Caco-2 (cell line): ENCODE measurements at regions of chr20 and their contacts with region 1.

Region 1: GRCh38 chr20:32031007-32031958 is 20.8 kb upstream of the HCK start:
- DNase-seq: peak; percentile 97 to 98
- H3K4me3 ChIP-seq: peak overlapping the region; percentile 31
- H3K4me3 Mint-ChIP-seq: peak overlapping the region; percentile 54
- H3K27ac Mint-ChIP-seq: no peak overlapping the region
- H3K4me1 ChIP-seq: peaks cover 6% of the 10 kb centered on the region
- H3K4me1 Mint-ChIP-seq: no peaks in the 10 kb centered on the region
- H3K27me3 ChIP-seq: peaks cover 7% of the 10 kb centered on the region
- H3K27me3 Mint-ChIP-seq: peaks cover 27% of the 10 kb centered on the region
- CTCF ChIP-seq: peak; percentile 24 to 100

Region 2: GRCh38 chr20:31822421-31823330 is 208.6 kb before region 1 on chr20:
- CTCF ChIA-PET with region 1: interaction called, 14 read pairs
- POLR2A ChIA-PET with region 1: no interaction called
- intact Hi-C with region 1: loop called (anchors 1 kb)
- DNase-seq: peak; percentile 80 to 92
- H3K4me3 ChIP-seq: no peak overlapping the region
- H3K4me3 Mint-ChIP-seq: no peak overlapping the region
- H3K27ac Mint-ChIP-seq: no peak overlapping the region
- H3K4me1 ChIP-seq: no peaks in the 10 kb centered on the region
- H3K4me1 Mint-ChIP-seq: no peaks in the 10 kb centered on the region
- H3K27me3 ChIP-seq: no peaks in the 10 kb centered on the region
- H3K27me3 Mint-ChIP-seq: no peaks in the 10 kb centered on the region
- CTCF ChIP-seq: peak; percentile 100

Region 3: DNA sequence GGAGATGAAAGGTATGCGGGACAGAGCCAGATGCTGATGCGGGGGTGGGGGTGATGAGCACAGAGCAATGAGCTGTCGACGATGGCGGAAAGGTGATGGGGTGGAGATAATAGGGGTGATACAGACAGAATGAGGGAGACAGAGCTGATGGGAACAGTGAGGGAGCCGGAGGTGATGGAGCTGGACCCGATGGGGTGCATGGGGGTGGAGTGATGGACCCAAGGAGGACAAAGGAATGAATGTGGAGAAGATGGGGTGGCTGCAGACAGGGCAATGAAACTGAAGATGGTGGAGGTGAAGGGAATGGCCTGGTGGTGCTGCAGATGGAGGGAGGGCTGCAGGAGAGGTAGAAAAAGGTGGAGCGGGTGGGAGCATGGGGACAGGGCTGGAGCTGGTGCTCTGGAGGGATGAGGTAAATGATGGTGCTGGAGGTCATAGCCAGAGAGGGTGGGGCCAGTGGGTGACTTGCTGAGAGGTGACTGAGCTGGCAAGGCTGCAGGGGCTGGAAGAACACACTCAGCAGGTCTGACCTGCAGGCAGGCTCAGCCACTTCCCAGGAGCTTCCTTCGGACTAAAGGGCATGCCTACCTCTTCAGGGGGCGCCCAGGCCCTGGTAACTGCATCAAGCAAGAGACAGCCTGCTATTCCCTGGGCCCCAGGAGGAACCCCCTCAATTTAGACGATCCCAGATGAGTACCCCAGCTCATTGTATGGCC is 179.9 kb before region 1 on chr20:
- CTCF ChIA-PET with region 1: interaction called, 33 read pairs
- POLR2A ChIA-PET with region 1: interaction called, 3 read pairs
- intact Hi-C with region 1: loop called (anchors 1 kb)
- DNase-seq: no peak
- H3K4me3 ChIP-seq: no peak overlapping the region
- H3K4me3 Mint-ChIP-seq: no peak overlapping the region
- H3K27ac Mint-ChIP-seq: no peak overlapping the region
- H3K4me1 ChIP-seq: peaks cover 7% of the 10 kb centered on the region; the same call in 1 of the 2 replicates
- H3K4me1 Mint-ChIP-seq: no peaks in the 10 kb centered on the region
- H3K27me3 ChIP-seq: peaks cover 11% of the 10 kb centered on the region
- H3K27me3 Mint-ChIP-seq: peaks cover 18% of the 10 kb centered on the region
- CTCF ChIP-seq: no peak

Region 4: DNA sequence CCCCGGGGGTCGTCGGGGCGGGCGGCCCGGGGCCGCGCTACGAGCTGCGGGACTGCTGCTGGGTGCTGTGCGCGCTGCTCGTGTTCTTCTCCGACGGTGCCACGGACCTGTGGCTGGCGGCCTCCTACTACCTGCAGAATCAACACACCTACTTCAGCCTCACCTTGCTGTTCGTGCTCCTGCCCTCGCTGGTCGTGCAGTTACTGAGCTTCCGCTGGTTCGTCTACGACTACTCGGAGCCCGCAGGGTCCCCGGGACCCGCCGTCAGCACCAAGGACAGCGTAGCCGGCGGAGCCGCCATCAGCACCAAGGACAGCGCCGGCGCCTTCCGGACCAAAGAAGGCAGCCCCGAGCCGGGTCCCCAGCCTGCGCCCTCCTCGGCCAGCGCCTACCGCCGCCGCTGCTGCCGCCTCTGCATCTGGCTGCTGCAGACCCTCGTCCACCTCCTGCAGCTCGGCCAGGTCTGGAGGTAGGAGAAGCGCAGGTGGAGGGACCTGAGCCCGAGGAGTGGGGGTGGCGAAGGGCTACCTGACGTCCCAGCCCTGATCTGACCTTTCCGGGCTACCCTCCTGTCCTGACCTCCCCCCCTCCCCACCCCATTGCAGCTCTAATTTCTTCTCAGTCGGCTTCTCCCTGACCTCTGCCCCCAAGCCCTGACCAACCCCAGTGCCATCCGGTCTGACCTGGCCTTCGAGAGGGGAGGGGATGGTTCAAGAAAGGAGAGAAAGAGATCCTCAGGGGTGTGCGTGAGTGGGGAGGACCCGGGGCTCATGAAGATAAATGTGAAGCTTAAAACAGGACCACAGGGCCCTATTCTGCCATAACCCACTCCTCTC is 62.8 kb before region 1 on chr20:
- CTCF ChIA-PET with region 1: no interaction called
- POLR2A ChIA-PET with region 1: no interaction called
- intact Hi-C with region 1: loop called (anchors 5 kb)
- DNase-seq: peak; percentile 88 to 97
- H3K4me3 ChIP-seq: no peak overlapping the region
- H3K4me3 Mint-ChIP-seq: peak overlapping the region; percentile 61
- H3K27ac Mint-ChIP-seq: no peak overlapping the region
- H3K4me1 ChIP-seq: 0 out of 2 replicates have a peak, but pooled peaks cover 11% of the 10 kb centered on the region
- H3K4me1 Mint-ChIP-seq: no peaks in the 10 kb centered on the region
- H3K27me3 ChIP-seq: peaks cover 2% of the 10 kb centered on the region
- H3K27me3 Mint-ChIP-seq: peaks cover 35% of the 10 kb centered on the region
- CTCF ChIP-seq: peak in 1 of 2 experiments; percentile 11

Region 5: GRCh38 chr20:31979713-31980426 is 51.4 kb before region 1 on chr20:
- CTCF ChIA-PET with region 1: no interaction called
- POLR2A ChIA-PET with region 1: no interaction called
- intact Hi-C with region 1: no loop called
- DNase-seq: no peak
- H3K4me3 ChIP-seq: no peak overlapping the region
- H3K4me3 Mint-ChIP-seq: no peak overlapping the region
- H3K27ac Mint-ChIP-seq: no peak overlapping the region
- H3K4me1 ChIP-seq: no peaks in the 10 kb centered on the region
- H3K4me1 Mint-ChIP-seq: no peaks in the 10 kb centered on the region
- H3K27me3 ChIP-seq: 0 out of 2 replicates have a peak, but pooled peaks cover 1% of the 10 kb centered on the region
- H3K27me3 Mint-ChIP-seq: peaks cover 37% of the 10 kb centered on the region
- CTCF ChIP-seq: no peak

Region 6: GRCh38 chr20:32091888-32092346 is 60.6 kb after region 1 on chr20:
- CTCF ChIA-PET with region 1: interaction called, 9 read pairs
- POLR2A ChIA-PET with region 1: no interaction called
- intact Hi-C with region 1: loop called (anchors 1 kb)
- DNase-seq: peak; percentile 91 to 95
- H3K4me3 ChIP-seq: no peak overlapping the region
- H3K4me3 Mint-ChIP-seq: no peak overlapping the region
- H3K27ac Mint-ChIP-seq: no peak overlapping the region
- H3K4me1 ChIP-seq: no peaks in the 10 kb centered on the region
- H3K4me1 Mint-ChIP-seq: no peaks in the 10 kb centered on the region
- H3K27me3 ChIP-seq: no peaks in the 10 kb centered on the region; the same call in 1 of the 2 replicates
- H3K27me3 Mint-ChIP-seq: peaks cover 13% of the 10 kb centered on the region
- CTCF ChIP-seq: peak; percentile 99 to 100

Region 7: GRCh38 chr20:32132911-32133549 is 101.7 kb after region 1 on chr20:
- CTCF ChIA-PET with region 1: no interaction called
- POLR2A ChIA-PET with region 1: no interaction called
- intact Hi-C with region 1: no loop called
- DNase-seq: peak in 1 of 2 experiments; percentile 32
- H3K4me3 ChIP-seq: no peak overlapping the region
- H3K4me3 Mint-ChIP-seq: no peak overlapping the region
- H3K27ac Mint-ChIP-seq: no peak overlapping the region
- H3K4me1 ChIP-seq: no peaks in the 10 kb centered on the region
- H3K4me1 Mint-ChIP-seq: no peaks in the 10 kb centered on the region
- H3K27me3 ChIP-seq: no peaks in the 10 kb centered on the region
- H3K27me3 Mint-ChIP-seq: no peaks in the 10 kb centered on the region
- CTCF ChIP-seq: no peak

Region 8: GRCh38 chr20:32263398-32263954 is 232.2 kb after region 1 on chr20:
- CTCF ChIA-PET with region 1: no interaction called
- POLR2A ChIA-PET with region 1: interaction called, 16 read pairs
- intact Hi-C with region 1: no loop called
- DNase-seq: no peak
- H3K4me3 ChIP-seq: no peak overlapping the region
- H3K4me3 Mint-ChIP-seq: no peak overlapping the region
- H3K27ac Mint-ChIP-seq: no peak overlapping the region
- H3K4me1 ChIP-seq: no peaks in the 10 kb centered on the region
- H3K4me1 Mint-ChIP-seq: peaks cover 7% of the 10 kb centered on the region
- H3K27me3 ChIP-seq: no peaks in the 10 kb centered on the region
- H3K27me3 Mint-ChIP-seq: no peaks in the 10 kb centered on the region
- CTCF ChIP-seq: no peak